GM12878 (cell line): ENCODE measurements at regions of chr10 and their contacts with region 1.

Region 1: DNA sequence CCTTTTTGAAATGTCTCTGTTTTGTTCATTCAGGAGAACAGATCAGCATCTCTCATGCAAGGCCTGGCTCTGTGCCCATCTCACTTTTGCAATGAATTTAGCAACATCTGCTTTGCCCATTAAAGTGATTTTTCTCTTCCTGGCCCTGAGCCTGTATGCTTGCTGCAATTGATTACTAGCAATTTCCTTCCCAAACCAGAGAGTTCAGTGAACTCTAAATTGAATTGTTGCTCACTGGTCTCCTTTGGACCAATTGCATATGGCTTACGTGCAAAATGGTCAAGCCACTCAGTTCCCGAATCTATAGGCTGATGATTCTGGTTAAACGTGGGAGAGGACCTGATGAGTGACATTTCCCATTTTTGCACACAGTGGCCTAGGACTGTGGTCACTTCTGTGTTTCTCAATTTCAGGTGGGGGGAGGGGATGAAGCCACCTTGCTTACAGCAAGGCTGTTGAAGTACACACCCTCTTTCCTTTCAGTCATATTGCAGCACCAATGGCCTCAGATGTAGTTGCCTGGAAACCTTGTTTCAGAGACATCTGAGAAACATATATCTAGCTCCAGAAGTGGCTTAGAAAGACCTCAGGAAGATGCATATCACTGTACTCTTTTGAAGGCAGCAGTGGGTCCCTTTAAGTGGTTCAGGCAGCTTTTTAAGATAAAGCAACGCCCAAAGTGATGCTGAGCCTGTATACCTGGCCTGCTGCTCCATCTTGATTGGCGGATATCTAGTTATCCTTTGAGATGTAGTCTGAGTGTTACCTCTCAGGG is 201.4 kb downstream of the PTEN start:
- DNase-seq: peak; percentile 95
- ATAC-seq: peak; percentile 74
- H3K4me3 ChIP-seq: no peak overlapping the region; the same call in 1 of the 2 replicates
- H3K27ac ChIP-seq: peak overlapping the region; percentile 92
- H3K4me1 ChIP-seq: peaks cover 88% of the 10 kb centered on the region
- H3K27me3 ChIP-seq: no peaks in the 10 kb centered on the region
- CTCF ChIP-seq: no peak
- EP300 ChIP-seq: peak; percentile 90 to 93; a peak in 3 of 4 replicates
- POLR2A ChIP-seq: no peak
- RAD21 ChIP-seq: 0 out of 2 replicates have a peak, but pooled peaks have one; percentile 11

Region 2: DNA sequence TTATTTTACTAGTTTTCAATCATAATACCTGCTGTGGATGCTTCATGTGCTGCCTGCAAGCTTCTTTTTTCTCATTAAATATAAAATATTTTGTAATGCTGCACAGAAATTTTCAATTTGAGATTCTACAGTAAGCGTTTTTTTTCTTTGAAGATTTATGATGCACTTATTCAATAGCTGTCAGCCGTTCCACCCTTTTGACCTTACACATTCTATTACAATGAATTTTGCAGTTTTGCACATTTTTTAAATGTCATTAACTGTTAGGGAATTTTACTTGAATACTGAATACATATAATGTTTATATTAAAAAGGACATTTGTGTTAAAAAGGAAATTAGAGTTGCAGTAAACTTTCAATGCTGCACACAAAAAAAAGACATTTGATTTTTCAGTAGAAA is 98.3 kb before region 1 on chr10:
- CTCF ChIA-PET with region 1: interaction called, 3 read pairs
- POLR2A ChIA-PET with region 1: no interaction called
- RAD21 ChIA-PET with region 1: interaction called, 4 read pairs
- SMC1A ChIA-PET with region 1: interaction called, 3 read pairs
- in situ Hi-C with region 1: no loop called
- intact Hi-C with region 1: loop called (anchors 5 kb)
- DNase-seq: no peak
- ATAC-seq: no peak
- H3K4me3 ChIP-seq: no peak overlapping the region
- H3K27ac ChIP-seq: no peak overlapping the region
- H3K4me1 ChIP-seq: no peaks in the 10 kb centered on the region
- H3K27me3 ChIP-seq: no peaks in the 10 kb centered on the region
- CTCF ChIP-seq: no peak
- EP300 ChIP-seq: no peak
- POLR2A ChIP-seq: no peak
- RAD21 ChIP-seq: no peak

Region 3: GRCh38 chr10:88080213-88080612 is 15.4 kb after region 1 on chr10:
- CTCF ChIA-PET with region 1: interaction called, 6 read pairs
- POLR2A ChIA-PET with region 1: interaction called, 6 read pairs
- RAD21 ChIA-PET with region 1: interaction called, 56 read pairs
- SMC1A ChIA-PET with region 1: interaction called, 133 read pairs
- in situ Hi-C with region 1: no loop called
- intact Hi-C with region 1: loop called (anchors 1 kb)
- DNase-seq: no peak
- ATAC-seq: peak; percentile 75
- H3K4me3 ChIP-seq: peak overlapping the region; percentile 30
- H3K27ac ChIP-seq: peak overlapping the region; percentile 60
- H3K4me1 ChIP-seq: peaks cover 52% of the 10 kb centered on the region
- H3K27me3 ChIP-seq: no peaks in the 10 kb centered on the region
- CTCF ChIP-seq: no peak
- EP300 ChIP-seq: peak; percentile 75 to 82; a peak in 3 of 4 replicates
- POLR2A ChIP-seq: no peak
- RAD21 ChIP-seq: 0 out of 2 replicates have a peak, but pooled peaks have one; percentile 15

Region 4: GRCh38 chr10:88108115-88108610 is 43.4 kb after region 1 on chr10:
- CTCF ChIA-PET with region 1: interaction called, 8 read pairs
- POLR2A ChIA-PET with region 1: interaction called, 5 read pairs
- RAD21 ChIA-PET with region 1: interaction called, 28 read pairs
- SMC1A ChIA-PET with region 1: interaction called, 229 read pairs
- in situ Hi-C with region 1: no loop called
- intact Hi-C with region 1: loop called (anchors 2 kb)
- DNase-seq: peak; percentile 94
- ATAC-seq: peak; percentile 56
- H3K4me3 ChIP-seq: no peak overlapping the region
- H3K27ac ChIP-seq: peak overlapping the region; percentile 92
- H3K4me1 ChIP-seq: peaks cover 92% of the 10 kb centered on the region
- H3K27me3 ChIP-seq: no peaks in the 10 kb centered on the region
- CTCF ChIP-seq: peak; percentile 39 to 46 (median 45); a peak in 5 of 6 replicates
- EP300 ChIP-seq: peak; percentile 69 to 76; a peak in 2 of 4 replicates
- POLR2A ChIP-seq: no peak
- RAD21 ChIP-seq: peak; percentile 41; the same call in 1 of the 2 replicates

Region 5: DNA sequence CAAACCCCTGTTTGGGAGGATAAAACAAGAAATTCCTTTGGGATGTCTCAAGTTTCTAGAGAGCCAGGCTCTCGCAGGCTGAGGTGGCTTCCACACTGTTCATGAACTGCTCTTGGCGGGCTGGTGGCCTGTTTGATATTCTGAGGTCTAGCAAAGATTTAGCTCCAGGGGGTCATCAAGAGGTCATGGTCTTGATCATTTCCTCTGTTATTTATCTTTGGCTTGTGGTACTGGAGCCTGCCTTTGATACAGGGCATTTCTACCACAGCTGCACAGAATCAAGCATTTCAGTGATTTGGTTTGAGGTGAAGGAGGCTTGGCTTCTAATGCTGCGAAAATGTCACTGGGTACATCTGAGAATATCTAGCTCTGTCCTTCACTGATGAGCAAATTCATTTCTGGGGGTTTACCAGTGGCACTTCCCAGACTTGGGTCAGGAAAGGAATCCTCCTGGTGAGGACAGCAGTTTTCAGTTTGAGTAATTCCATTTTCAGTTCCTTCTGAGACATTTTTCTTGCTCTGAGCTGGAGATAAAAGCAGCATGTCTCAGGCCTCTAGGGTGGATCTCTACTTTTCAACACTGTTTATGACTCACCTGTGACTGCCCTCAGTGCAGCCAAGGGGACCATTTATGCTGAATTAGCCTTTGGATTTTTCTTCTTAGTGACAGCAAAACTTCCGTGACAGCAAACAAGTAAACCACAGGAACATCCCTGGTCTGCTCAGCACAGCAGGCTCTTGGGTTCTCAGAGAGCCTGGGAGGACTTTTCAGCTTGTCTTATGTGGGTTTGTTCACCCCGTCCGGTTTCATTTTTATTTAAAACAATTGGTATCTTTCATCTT is 206.3 kb after region 1 on chr10:
- CTCF ChIA-PET with region 1: interaction called, 3 read pairs
- POLR2A ChIA-PET with region 1: interaction called, 3 read pairs
- RAD21 ChIA-PET with region 1: no interaction called
- SMC1A ChIA-PET with region 1: interaction called, 6 read pairs
- in situ Hi-C with region 1: no loop called
- intact Hi-C with region 1: loop called (anchors 1 kb)
- DNase-seq: peak; percentile 97
- ATAC-seq: peak; percentile 95
- H3K4me3 ChIP-seq: no peak overlapping the region; the same call in 1 of the 2 replicates
- H3K27ac ChIP-seq: peak overlapping the region; percentile 96
- H3K4me1 ChIP-seq: peaks cover 48% of the 10 kb centered on the region
- H3K27me3 ChIP-seq: no peaks in the 10 kb centered on the region
- CTCF ChIP-seq: no peak
- EP300 ChIP-seq: peak; percentile 93 to 95
- POLR2A ChIP-seq: peak; percentile 7; the same call in 1 of the 2 replicates
- RAD21 ChIP-seq: peak; percentile 17; the same call in 1 of the 2 replicates